ENCODE measurements at regions of chr12 and their contacts with region 1.

Region 1: GRCh38 chr12:111274777-111275176 is 94.1 kb downstream of the PHETA1 start:
- DNase-seq: peak; percentile 81
- H3K4me3 ChIP-seq: no peak overlapping the region; a peak in 1 of 4 replicates
- H3K27ac ChIP-seq: peak overlapping the region in 1 of 2 experiments; percentile 91; a peak in 2 of 4 replicates
- H3K4me1 ChIP-seq: peaks cover 0 to 14% of the 10 kb centered on the region in 2 experiments; a peak in 2 of 4 replicates
- H3K27me3 ChIP-seq: no peaks in the 10 kb centered on the region; the same call in 1 of the 2 replicates
- CTCF ChIP-seq: peak; percentile 53
- EP300 ChIP-seq: no peak
- RAD21 ChIP-seq: peak; percentile 70

Region 2: DNA sequence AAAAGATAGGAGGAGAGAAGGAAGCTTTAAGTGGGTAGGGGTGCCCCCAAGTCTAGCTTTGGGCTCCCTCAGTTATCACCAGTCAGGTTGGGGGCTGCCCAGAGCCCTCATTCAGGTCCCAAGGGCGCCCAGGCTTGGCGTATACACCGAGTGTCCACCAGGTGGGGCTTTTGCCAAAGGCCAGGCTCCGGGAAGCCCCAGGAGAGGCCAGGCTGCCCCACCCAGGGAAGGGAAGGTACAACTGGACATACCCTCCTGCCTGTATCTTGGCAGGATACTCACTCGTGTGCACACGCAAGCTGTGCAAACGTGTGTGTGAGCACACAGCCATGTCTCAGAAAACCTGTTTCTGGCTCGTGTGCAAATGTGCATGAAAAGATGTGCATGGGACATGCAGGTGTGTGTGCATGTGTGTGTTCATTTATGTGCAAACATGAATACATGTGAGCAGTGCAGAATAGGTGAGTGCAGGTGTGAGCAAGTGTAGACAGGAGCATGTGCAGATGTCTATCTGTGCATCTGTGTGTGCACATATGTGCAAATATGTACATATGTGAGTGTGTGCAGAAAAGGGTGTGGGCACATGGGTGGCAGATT is 250.5 kb before region 1 on chr12:
- CTCF ChIA-PET with region 1: interaction called, 17 read pairs
- POLR2A ChIA-PET with region 1: no interaction called
- DNase-seq: peak; percentile 83
- H3K4me3 ChIP-seq: peak overlapping the region in 1 of 2 experiments; percentile 41; a peak in 1 of 4 replicates
- H3K27ac ChIP-seq: no peak overlapping the region
- H3K4me1 ChIP-seq: no peaks in the 10 kb centered on the region; a peak in 1 of 4 replicates
- H3K27me3 ChIP-seq: 0 out of 2 replicates have a peak, but pooled peaks cover 8% of the 10 kb centered on the region
- CTCF ChIP-seq: peak; percentile 70
- EP300 ChIP-seq: no peak
- RAD21 ChIP-seq: peak; percentile 90

Region 3: DNA sequence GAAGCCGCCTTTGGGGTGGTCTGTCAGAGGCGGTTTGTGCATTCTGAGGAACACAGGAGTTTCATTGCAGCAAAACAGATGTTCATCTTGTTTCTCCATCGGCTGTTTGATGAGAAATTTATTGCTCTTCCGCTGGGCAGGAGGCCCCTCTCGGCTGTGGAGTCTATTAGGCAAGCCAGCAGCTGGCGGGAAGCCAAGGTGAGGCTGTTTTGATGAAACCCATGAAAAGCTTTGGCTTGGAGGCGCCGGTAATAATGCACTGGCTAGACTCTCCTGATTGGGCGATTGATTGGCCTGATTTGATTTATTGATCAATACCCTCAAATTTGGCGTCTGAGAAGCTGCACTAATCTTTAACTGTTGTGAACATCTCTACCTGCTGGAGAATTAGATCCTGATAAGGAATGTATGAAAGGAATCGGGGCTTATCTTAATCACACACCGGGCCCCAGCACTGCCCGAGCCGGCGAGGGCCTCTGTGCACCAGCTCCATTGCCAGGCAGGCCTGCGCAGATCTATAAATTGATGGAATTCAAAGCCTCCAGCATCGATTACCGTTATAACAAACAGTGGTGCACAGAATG is 93.5 kb before region 1 on chr12:
- CTCF ChIA-PET with region 1: interaction called, 16 read pairs
- POLR2A ChIA-PET with region 1: interaction called, 3 read pairs
- DNase-seq: peak; percentile 83
- H3K4me3 ChIP-seq: no peak overlapping the region; a peak in 1 of 4 replicates
- H3K27ac ChIP-seq: peak overlapping the region in 1 of 2 experiments; percentile 99; a peak in 2 of 4 replicates
- H3K4me1 ChIP-seq: peaks cover 4 to 83% of the 10 kb centered on the region in 2 experiments; a peak in 3 of 4 replicates
- H3K27me3 ChIP-seq: peaks cover 9% of the 10 kb centered on the region; the same call in 1 of the 2 replicates
- CTCF ChIP-seq: no peak
- EP300 ChIP-seq: peak in 1 of 2 experiments; percentile 88; a peak in 2 of 4 replicates
- RAD21 ChIP-seq: peak; percentile 38

Region 4: GRCh38 chr12:111211910-111212757 is 62.6 kb before region 1 on chr12:
- CTCF ChIA-PET with region 1: interaction called, 10 read pairs
- POLR2A ChIA-PET with region 1: no interaction called
- DNase-seq: no peak
- H3K4me3 ChIP-seq: no peak overlapping the region
- H3K27ac ChIP-seq: peak overlapping the region in 1 of 2 experiments; percentile 99; a peak in 2 of 4 replicates
- H3K4me1 ChIP-seq: peaks cover 0 to 62% of the 10 kb centered on the region in 2 experiments; a peak in 2 of 4 replicates
- H3K27me3 ChIP-seq: no peaks in the 10 kb centered on the region
- CTCF ChIP-seq: no peak
- EP300 ChIP-seq: no peak
- RAD21 ChIP-seq: no peak

Region 5: GRCh38 chr12:111377440-111377839 is 102.7 kb after region 1 on chr12:
- CTCF ChIA-PET with region 1: no interaction called
- POLR2A ChIA-PET with region 1: no interaction called
- DNase-seq: no peak
- H3K4me3 ChIP-seq: no peak overlapping the region
- H3K27ac ChIP-seq: no peak overlapping the region
- H3K4me1 ChIP-seq: no peaks in the 10 kb centered on the region
- H3K27me3 ChIP-seq: no peaks in the 10 kb centered on the region
- CTCF ChIP-seq: no peak
- EP300 ChIP-seq: no peak
- RAD21 ChIP-seq: no peak